ENCODE measurements at regions of chr3 and their contacts with region 1.

Region 1: GRCh38 chr3:99686955-99687612 is 48.7 kb downstream of the COL8A1 start:
- DNase-seq: peak in 1 of 2 experiments; percentile 69
- H3K4me3 ChIP-seq: no peak overlapping the region
- H3K27ac ChIP-seq: no peak overlapping the region
- H3K4me1 ChIP-seq: no peaks in the 10 kb centered on the region
- H3K27me3 ChIP-seq: no peaks in the 10 kb centered on the region
- CTCF ChIP-seq: peak; percentile 98

Region 2: DNA sequence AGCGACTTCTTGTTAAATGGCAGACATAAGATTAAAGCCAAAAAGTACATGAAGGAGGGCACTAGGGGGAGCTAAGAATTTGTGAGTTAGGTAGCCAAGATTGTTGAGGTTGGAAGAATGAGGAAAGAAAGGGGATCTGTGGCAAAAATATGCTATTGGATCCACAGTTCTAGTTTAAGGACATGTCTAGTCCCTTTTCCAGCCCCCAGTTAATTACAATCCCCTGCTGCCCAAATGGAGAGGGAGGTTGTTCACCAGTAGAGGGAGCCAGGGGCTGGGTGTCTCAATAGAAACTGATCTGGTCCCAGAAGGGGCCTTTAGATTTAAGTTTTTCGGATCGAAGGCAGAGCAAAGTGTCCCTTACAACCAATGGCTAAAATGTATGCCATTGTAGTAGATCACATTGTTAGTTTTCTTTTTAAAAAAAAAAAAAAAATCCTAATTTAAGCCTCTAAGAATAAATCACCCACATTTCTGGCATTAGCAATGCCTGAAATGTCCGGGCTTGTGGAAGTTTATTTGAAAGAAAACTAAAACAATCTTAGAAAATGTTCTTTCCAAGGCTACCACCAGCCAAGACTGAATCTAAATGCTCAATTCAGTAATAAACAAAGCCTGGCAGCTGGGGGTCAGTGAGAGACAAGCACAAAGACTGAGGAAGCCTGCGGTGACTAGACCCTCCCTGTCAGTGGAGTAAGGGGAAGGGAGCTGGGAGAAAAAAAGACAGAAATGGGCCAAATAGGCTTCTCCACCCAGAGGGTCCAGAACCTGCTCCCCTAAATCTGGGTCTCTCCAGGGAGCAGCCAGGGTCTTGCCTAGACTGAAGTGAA is 41.6 kb before region 1 on chr3:
- CTCF ChIA-PET with region 1: interaction called, 3 read pairs
- POLR2A ChIA-PET with region 1: no interaction called
- intact Hi-C with region 1: loop called (anchors 1 kb)
- DNase-seq: no peak
- H3K4me3 ChIP-seq: no peak overlapping the region
- H3K27ac ChIP-seq: no peak overlapping the region
- H3K4me1 ChIP-seq: no peaks in the 10 kb centered on the region
- H3K27me3 ChIP-seq: no peaks in the 10 kb centered on the region
- CTCF ChIP-seq: peak; percentile 82

Measured in PC-9 (cell line).